Activated CD4-positive, alpha-beta T cell treated with anti-CD3 and anti-CD28 coated beads for 36 hours (primary cell): ENCODE measurements at regions of chr7 and their contacts with region 1.

Region 1: GRCh38 chr7:31261341-31261740 is 79.2 kb downstream of the NEUROD6 start:
- DNase-seq: no peak
- ATAC-seq: no peak
- H3K4me3 Mint-ChIP-seq: no peak overlapping the region
- H3K27ac Mint-ChIP-seq: no peak overlapping the region
- H3K4me1 Mint-ChIP-seq: no peaks in the 10 kb centered on the region
- H3K27me3 Mint-ChIP-seq: peaks cover 3% of the 10 kb centered on the region

Region 2: GRCh38 chr7:31311552-31311951 is 50.2 kb after region 1 on chr7:
- CTCF ChIA-PET with region 1: no interaction called
- POLR2A ChIA-PET with region 1: no interaction called
- intact Hi-C with region 1: loop called in 1 of 2 experiments (anchors 5 kb)
- DNase-seq: no peak
- ATAC-seq: no peak
- H3K4me3 Mint-ChIP-seq: no peak overlapping the region
- H3K27ac Mint-ChIP-seq: no peak overlapping the region
- H3K4me1 Mint-ChIP-seq: no peaks in the 10 kb centered on the region
- H3K27me3 Mint-ChIP-seq: peaks cover 2% of the 10 kb centered on the region